ENCODE measurements at regions of chrX and their contacts with region 1.

Region 1: GRCh38 chrX:107654872-107655761 is 26.8 kb downstream of the PRPS1 start:
- DNase-seq: peak; percentile 64 to 71 (median 67)
- H3K4me3 ChIP-seq: no peak overlapping the region
- H3K4me3 Mint-ChIP-seq: peak overlapping the region in 2 of 8 donors; percentile 2 to 9
- H3K27ac ChIP-seq: no peak overlapping the region
- H3K27ac Mint-ChIP-seq: peak overlapping the region in 5 of 7 donors; percentile 47 to 82 (median 57)
- H3K4me1 ChIP-seq: peaks cover 12% of the 10 kb centered on the region
- H3K4me1 Mint-ChIP-seq: peaks cover 11 to 15% (median 14%) of the 10 kb centered on the region in 4 donors
- H3K27me3 ChIP-seq: no peaks in the 10 kb centered on the region
- H3K27me3 Mint-ChIP-seq: no peaks in the 10 kb centered on the region

Region 2: DNA sequence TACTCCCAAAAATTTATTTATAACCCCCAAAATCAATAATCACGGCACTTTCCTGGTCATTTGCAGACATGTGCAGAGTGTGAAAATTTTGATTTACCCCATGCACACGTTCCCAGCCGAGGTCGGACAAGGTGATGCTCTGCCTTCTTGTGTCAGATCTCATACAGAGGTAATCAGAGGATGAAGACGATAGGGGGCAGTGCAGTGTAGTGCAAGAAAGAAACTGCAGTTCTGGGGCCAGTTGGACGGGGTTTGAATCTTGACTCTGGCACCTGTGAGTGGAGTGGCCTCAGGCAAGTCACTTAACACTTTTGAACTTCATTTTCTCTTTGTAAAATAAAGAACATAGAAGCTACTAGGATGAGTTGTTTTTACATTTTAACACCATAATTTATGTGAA is 117.3 kb before region 1 on chrX:
- CTCF ChIA-PET with region 1: interaction called, 7 read pairs
- POLR2A ChIA-PET with region 1: no interaction called
- intact Hi-C with region 1: loop called (anchors 5 kb)
- DNase-seq: peak; percentile 19 to 28 (median 23)
- H3K4me3 ChIP-seq: no peak overlapping the region
- H3K4me3 Mint-ChIP-seq: no peak overlapping the region
- H3K27ac ChIP-seq: no peak overlapping the region
- H3K27ac Mint-ChIP-seq: no peak overlapping the region
- H3K4me1 ChIP-seq: no peaks in the 10 kb centered on the region
- H3K4me1 Mint-ChIP-seq: no peaks in the 10 kb centered on the region
- H3K27me3 ChIP-seq: no peaks in the 10 kb centered on the region
- H3K27me3 Mint-ChIP-seq: peaks cover 2 to 7% of the 10 kb centered on the region in 2 donors

Region 3: GRCh38 chrX:107562482-107562881 is 92.6 kb before region 1 on chrX:
- CTCF ChIA-PET with region 1: no interaction called
- POLR2A ChIA-PET with region 1: no interaction called
- intact Hi-C with region 1: no loop called
- DNase-seq: no peak
- H3K4me3 ChIP-seq: no peak overlapping the region
- H3K4me3 Mint-ChIP-seq: no peak overlapping the region
- H3K27ac ChIP-seq: no peak overlapping the region
- H3K27ac Mint-ChIP-seq: peak overlapping the region in 1 of 7 donors; percentile 0
- H3K4me1 ChIP-seq: no peaks in the 10 kb centered on the region
- H3K4me1 Mint-ChIP-seq: no peaks in the 10 kb centered on the region
- H3K27me3 ChIP-seq: no peaks in the 10 kb centered on the region
- H3K27me3 Mint-ChIP-seq: peaks cover 1 to 2% of the 10 kb centered on the region in 2 donors

Measured in CD4-positive, alpha-beta memory T cell (primary cell).